ENCODE measurements at regions of chr3 and their contacts with region 1.

Region 1: DNA sequence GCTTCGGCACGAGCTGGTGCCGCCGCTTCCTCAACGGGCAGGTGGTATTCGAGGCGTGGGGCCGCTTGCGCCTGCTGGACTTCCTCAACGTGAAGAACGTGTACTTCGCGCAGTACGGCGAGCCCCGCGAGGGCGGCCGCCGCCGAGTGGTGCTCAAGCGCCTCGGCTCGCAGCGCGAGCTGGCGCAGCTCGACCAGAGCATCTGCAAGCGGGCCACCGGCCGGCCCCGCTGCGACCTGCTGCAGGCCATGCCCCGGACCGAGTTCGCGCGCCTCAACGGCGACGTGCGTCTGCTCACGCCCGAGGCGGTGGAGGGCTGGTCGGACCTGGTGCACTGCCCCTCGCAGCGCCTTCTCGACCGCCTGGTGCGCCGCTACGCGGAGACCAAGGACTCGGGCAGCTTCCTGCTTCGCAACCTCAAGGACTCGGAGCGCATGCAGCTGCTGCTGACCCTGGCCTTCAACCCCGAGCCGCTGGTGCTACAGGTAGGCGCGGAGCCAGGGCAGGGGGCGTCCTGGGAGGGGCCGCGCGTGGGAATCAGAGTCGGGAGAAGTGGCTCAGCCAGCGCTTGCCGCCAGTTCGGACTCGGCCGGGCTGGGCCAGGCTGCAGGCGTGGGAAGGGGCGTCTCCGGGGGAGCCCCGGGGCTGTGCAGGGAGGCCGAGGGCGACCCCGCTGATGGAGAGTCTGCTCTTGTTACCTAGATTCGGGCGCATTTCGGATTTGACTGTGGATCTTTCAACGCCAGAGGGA is 1.1 kb downstream of the DIPK2A start:
- DNase-seq: peak; percentile 68
- ATAC-seq: peak; percentile 18
- H3K4me3 ChIP-seq: peak overlapping the region; percentile 51
- H3K27ac ChIP-seq: peak overlapping the region; percentile 39
- H3K4me1 ChIP-seq: no peaks in the 10 kb centered on the region
- H3K27me3 ChIP-seq: no peaks in the 10 kb centered on the region
- CTCF ChIP-seq: peak; percentile 52
- POLR2A ChIP-seq: no peak
- RAD21 ChIP-seq: peak; percentile 2; the same call in 1 of the 2 replicates

Region 2: DNA sequence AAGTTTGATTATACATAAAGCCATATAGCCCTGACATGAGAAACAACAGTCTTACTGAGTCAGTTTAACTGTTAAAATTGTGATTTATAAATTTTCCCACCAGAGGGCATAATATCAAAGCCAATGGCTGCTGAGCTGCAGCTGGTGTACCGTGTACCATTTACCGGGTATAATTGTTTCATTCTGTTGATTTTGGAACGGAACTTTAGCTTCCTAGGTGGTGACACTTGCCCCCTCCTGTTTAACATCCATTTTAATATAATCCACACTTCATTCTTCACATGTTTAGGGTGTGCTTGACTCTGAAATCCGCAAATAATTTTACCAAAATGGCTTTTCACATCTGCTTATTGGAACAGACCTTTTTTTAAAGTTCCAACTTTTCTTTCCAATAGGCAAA is 197.2 kb before region 1 on chr3:
- CTCF ChIA-PET with region 1: no interaction called
- POLR2A ChIA-PET with region 1: no interaction called
- dilution Hi-C with region 1: no loop called
- in situ Hi-C with region 1: no loop called
- intact Hi-C with region 1: loop called (anchors 1 kb)
- DNase-seq: peak; percentile 13
- ATAC-seq: peak; percentile 87
- H3K4me3 ChIP-seq: no peak overlapping the region
- H3K27ac ChIP-seq: no peak overlapping the region
- H3K4me1 ChIP-seq: no peaks in the 10 kb centered on the region; the same call in 1 of the 2 replicates
- H3K27me3 ChIP-seq: no peaks in the 10 kb centered on the region
- CTCF ChIP-seq: peak; percentile 56
- POLR2A ChIP-seq: no peak
- RAD21 ChIP-seq: peak; percentile 63

Region 3: DNA sequence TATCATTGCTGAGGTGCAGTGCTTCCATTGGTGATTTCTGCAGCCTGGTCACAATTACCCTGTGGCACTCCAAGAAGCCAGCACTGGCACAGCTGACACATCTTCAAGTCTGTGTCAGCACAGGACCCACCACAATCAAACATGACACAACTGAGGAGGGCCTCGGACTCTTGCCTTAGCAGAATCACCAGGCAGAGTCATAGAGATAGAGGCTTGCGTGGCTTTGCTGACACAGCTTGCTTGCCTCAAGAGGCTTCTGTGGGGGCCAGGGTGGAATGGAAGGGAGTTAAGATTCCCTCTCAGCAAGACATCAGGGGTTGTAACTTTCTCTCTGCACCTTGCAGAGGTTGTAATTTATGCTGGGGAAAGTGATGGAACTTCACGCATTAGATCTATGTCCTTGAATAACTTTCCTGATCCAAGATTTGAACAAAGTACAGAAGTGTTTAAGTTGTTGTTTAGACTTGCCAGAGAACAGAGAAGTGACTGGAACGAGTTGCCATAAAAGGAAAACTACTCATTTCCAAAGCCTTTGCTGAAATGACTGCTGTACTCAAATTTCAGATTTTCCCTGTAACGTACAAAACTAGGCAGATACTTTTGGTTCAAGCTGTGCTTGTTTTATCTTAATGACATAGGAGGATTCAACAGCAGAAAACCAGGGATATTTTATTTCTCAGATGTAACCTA is 169.6 kb after region 1 on chr3:
- CTCF ChIA-PET with region 1: no interaction called
- POLR2A ChIA-PET with region 1: no interaction called
- dilution Hi-C with region 1: no loop called
- in situ Hi-C with region 1: no loop called
- intact Hi-C with region 1: loop called (anchors 1 kb)
- DNase-seq: peak; percentile 82
- ATAC-seq: peak; percentile 89
- H3K4me3 ChIP-seq: peak overlapping the region; percentile 7; the same call in 1 of the 2 replicates
- H3K27ac ChIP-seq: peak overlapping the region; percentile 83
- H3K4me1 ChIP-seq: peaks cover 10% of the 10 kb centered on the region
- H3K27me3 ChIP-seq: no peaks in the 10 kb centered on the region
- CTCF ChIP-seq: no peak
- POLR2A ChIP-seq: no peak
- RAD21 ChIP-seq: no peak

Region 4: DNA sequence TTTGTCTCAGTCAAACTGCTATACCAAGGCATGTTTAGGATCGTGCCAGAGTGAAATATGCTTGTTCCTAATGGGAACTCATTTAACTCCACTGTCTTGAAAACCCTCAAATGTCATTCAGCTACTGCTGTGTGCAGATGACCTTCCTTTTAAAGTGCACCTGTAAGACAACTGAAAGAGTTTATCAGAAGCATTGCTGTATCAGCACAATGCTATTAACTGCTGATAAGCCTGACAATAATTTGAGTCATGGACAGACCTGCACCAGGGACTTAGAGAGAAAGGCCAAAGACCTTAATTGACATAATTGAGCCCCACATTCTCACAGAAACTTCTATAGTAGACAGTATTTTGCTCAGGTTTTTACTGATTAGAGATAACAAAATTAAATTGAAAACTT is 556.9 kb after region 1 on chr3:
- CTCF ChIA-PET with region 1: no interaction called
- POLR2A ChIA-PET with region 1: no interaction called
- dilution Hi-C with region 1: no loop called
- in situ Hi-C with region 1: no loop called
- intact Hi-C with region 1: loop called (anchors 5 kb)
- DNase-seq: no peak
- ATAC-seq: no peak
- H3K4me3 ChIP-seq: no peak overlapping the region
- H3K27ac ChIP-seq: no peak overlapping the region
- H3K4me1 ChIP-seq: no peaks in the 10 kb centered on the region
- H3K27me3 ChIP-seq: no peaks in the 10 kb centered on the region
- CTCF ChIP-seq: no peak
- POLR2A ChIP-seq: no peak
- RAD21 ChIP-seq: no peak

Region 5: DNA sequence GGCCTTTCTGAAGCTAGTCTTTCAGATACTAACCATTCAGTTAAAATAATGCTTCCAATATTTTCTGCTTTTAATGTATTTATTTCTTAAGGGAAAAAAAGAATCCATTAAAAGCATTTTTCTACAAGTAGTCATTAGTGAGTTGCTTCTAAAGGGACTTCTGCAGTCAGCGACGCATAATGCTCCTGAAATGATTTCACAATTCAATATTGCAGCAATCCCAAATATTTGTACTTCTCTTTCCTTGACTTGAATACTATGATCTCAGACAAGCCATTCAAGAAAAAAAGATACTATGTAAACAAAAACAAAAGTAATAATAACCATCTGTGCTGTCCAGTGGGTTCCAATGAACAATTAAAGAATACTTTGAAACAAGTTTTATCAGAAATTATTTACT is 679.9 kb after region 1 on chr3:
- CTCF ChIA-PET with region 1: no interaction called
- POLR2A ChIA-PET with region 1: no interaction called
- dilution Hi-C with region 1: no loop called
- in situ Hi-C with region 1: no loop called
- intact Hi-C with region 1: loop called (anchors 5 kb)
- DNase-seq: peak; percentile 54
- ATAC-seq: peak; percentile 84
- H3K4me3 ChIP-seq: no peak overlapping the region
- H3K27ac ChIP-seq: no peak overlapping the region
- H3K4me1 ChIP-seq: no peaks in the 10 kb centered on the region
- H3K27me3 ChIP-seq: no peaks in the 10 kb centered on the region
- CTCF ChIP-seq: no peak
- POLR2A ChIP-seq: no peak
- RAD21 ChIP-seq: no peak

Region 6: GRCh38 chr3:145767909-145768308 is 1795.2 kb after region 1 on chr3:
- CTCF ChIA-PET with region 1: no interaction called
- POLR2A ChIA-PET with region 1: no interaction called
- dilution Hi-C with region 1: no loop called
- in situ Hi-C with region 1: no loop called
- intact Hi-C with region 1: loop called (anchors 5 kb)
- DNase-seq: no peak
- ATAC-seq: no peak
- H3K4me3 ChIP-seq: no peak overlapping the region
- H3K27ac ChIP-seq: no peak overlapping the region
- H3K4me1 ChIP-seq: no peaks in the 10 kb centered on the region
- H3K27me3 ChIP-seq: no peaks in the 10 kb centered on the region
- CTCF ChIP-seq: peak; percentile 17; the same call in 1 of the 2 replicates
- POLR2A ChIP-seq: no peak
- RAD21 ChIP-seq: 0 out of 2 replicates have a peak, but pooled peaks have one; percentile 18